ENCODE measurements at regions of chr16 and their contacts with region 1.

Region 1: GRCh38 chr16:29815793-29816693 is at the start of gene PAGR1:
- DNase-seq: peak; percentile 99
- ATAC-seq: peak; percentile 63
- H3K4me3 ChIP-seq: peak within 1 kb of the TSS; percentile 86 to 93 (median 88)
- H3K27ac ChIP-seq: peak within 1 kb of the TSS; percentile 83
- H3K4me1 ChIP-seq: peaks cover 80% of the 10 kb centered on the region
- H3K27me3 ChIP-seq: peaks cover 0 to 12% of the 10 kb centered on the region in 2 experiments; a peak in 2 of 5 replicates
- CTCF ChIP-seq: peak; percentile 99
- EP300 ChIP-seq: peak in 1 of 2 experiments; percentile 75; a peak in 2 of 4 replicates
- POLR2A ChIP-seq: peak in 1 of 2 experiments; percentile 85; a peak in 2 of 4 replicates
- RAD21 ChIP-seq: peak; percentile 96
- total RNA-seq, gene PAGR1: 66.4 and 74.5 TPM in 2 replicates

Region 2: DNA sequence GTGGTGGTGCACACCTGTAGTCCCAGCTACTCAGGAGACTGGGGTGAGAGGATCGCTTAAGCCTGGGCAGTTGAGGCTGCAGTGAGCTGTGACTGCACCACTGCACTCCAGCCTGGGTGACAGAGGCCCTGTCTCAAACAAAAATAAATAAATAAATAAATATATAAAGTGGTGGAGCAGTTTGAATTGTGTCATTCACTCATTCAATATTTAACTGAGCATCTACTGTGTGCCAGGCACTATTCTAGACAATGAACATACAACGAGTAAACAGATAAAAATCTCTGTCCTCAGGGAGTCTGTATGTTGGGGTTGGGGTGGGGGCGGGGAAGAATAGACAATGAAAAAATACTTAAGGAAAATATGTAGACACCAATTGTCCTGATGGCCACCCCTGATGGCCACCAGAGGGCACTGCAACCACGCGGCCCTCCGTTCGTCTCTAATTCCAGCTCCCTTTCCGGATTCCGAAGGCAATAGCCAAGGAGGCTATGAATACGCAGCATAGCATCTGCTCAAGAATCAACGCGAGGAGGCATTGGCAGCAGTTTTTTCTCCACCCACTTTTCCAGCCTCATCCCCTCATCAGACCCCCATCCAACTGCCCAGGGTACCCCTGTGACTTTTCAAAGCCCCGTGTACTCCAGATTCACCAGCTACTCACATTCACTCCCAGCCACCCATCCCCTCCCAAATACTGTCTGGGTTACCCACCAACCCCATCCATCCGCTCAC is 115.6 kb before region 1 on chr16:
- CTCF ChIA-PET with region 1: interaction called, 6 read pairs
- POLR2A ChIA-PET with region 1: interaction called, 11 read pairs
- in situ Hi-C with region 1: no loop called
- intact Hi-C with region 1: no loop called
- DNase-seq: peak; percentile 71
- ATAC-seq: peak; percentile 64
- H3K4me3 ChIP-seq: no peak overlapping the region
- H3K27ac ChIP-seq: no peak overlapping the region
- H3K4me1 ChIP-seq: peaks cover 19% of the 10 kb centered on the region
- H3K27me3 ChIP-seq: peaks cover 0 to 4% of the 10 kb centered on the region in 2 experiments; a peak in 1 of 5 replicates
- CTCF ChIP-seq: peak; percentile 92
- EP300 ChIP-seq: no peak
- POLR2A ChIP-seq: no peak
- RAD21 ChIP-seq: peak; percentile 91

Region 3: DNA sequence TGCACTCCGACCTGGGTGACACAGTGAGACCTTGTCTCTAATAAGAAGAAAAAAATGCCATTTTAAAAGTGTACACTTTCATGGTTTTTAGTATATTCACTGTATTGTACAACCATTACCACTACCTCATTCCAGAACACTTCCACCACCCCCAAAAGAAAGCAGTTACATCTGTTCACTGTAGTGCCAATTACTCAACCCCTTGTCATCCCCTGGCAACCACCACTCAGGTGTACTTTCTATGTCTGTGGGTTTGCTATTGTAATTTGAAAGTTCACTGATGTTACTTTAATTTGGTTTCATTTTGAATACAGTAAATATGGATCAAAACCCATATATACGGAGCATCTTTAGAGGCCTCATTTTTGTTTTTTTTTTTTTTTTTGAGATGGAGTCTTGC is 31.9 kb before region 1 on chr16:
- CTCF ChIA-PET with region 1: no interaction called
- POLR2A ChIA-PET with region 1: no interaction called
- in situ Hi-C with region 1: no loop called
- intact Hi-C with region 1: no loop called
- DNase-seq: no peak
- ATAC-seq: no peak
- H3K4me3 ChIP-seq: no peak overlapping the region
- H3K27ac ChIP-seq: no peak overlapping the region
- H3K4me1 ChIP-seq: peaks cover 46% of the 10 kb centered on the region
- H3K27me3 ChIP-seq: peaks cover 2 to 18% of the 10 kb centered on the region in 2 experiments; a peak in 4 of 5 replicates
- CTCF ChIP-seq: no peak
- EP300 ChIP-seq: no peak
- POLR2A ChIP-seq: no peak
- RAD21 ChIP-seq: no peak

Region 4: GRCh38 chr16:29805378-29806098 is 10.5 kb before region 1 on chr16:
- CTCF ChIA-PET with region 1: no interaction called
- POLR2A ChIA-PET with region 1: interaction called, 80 read pairs
- in situ Hi-C with region 1: no loop called
- intact Hi-C with region 1: no loop called
- DNase-seq: peak; percentile 97
- ATAC-seq: peak; percentile 78
- H3K4me3 ChIP-seq: peak overlapping the region; percentile 59 to 85 (median 77)
- H3K27ac ChIP-seq: peak overlapping the region; percentile 88
- H3K4me1 ChIP-seq: peaks cover 50% of the 10 kb centered on the region
- H3K27me3 ChIP-seq: no peaks in the 10 kb centered on the region
- CTCF ChIP-seq: peak; percentile 36
- EP300 ChIP-seq: peak in 1 of 2 experiments; percentile 64; a peak in 1 of 4 replicates
- POLR2A ChIP-seq: peak in 1 of 2 experiments; percentile 82; a peak in 2 of 4 replicates
- RAD21 ChIP-seq: peak; percentile 66

Region 5: GRCh38 chr16:29862884-29863668 is 47.0 kb after region 1 on chr16 and contains the start of gene CDIPT:
- CTCF ChIA-PET with region 1: no interaction called
- POLR2A ChIA-PET with region 1: interaction called, 18 read pairs
- in situ Hi-C with region 1: no loop called
- intact Hi-C with region 1: no loop called
- DNase-seq: peak; percentile 97
- ATAC-seq: peak; percentile 94
- H3K4me3 ChIP-seq: peak within 1 kb of the TSS; percentile 85 to 95 (median 88)
- H3K27ac ChIP-seq: peak within 1 kb of the TSS; percentile 97
- H3K4me1 ChIP-seq: peaks cover 37% of the 10 kb centered on the region
- H3K27me3 ChIP-seq: no peaks in the 10 kb centered on the region; a peak in 1 of 5 replicates
- CTCF ChIP-seq: peak; percentile 95
- EP300 ChIP-seq: peak in 1 of 2 experiments; percentile 50; a peak in 3 of 4 replicates
- POLR2A ChIP-seq: peak; percentile 42 to 64
- RAD21 ChIP-seq: peak; percentile 65; the same call in 1 of the 2 replicates
- total RNA-seq, gene CDIPT: 39.2 and 54.9 TPM in 2 replicates

Region 6: DNA sequence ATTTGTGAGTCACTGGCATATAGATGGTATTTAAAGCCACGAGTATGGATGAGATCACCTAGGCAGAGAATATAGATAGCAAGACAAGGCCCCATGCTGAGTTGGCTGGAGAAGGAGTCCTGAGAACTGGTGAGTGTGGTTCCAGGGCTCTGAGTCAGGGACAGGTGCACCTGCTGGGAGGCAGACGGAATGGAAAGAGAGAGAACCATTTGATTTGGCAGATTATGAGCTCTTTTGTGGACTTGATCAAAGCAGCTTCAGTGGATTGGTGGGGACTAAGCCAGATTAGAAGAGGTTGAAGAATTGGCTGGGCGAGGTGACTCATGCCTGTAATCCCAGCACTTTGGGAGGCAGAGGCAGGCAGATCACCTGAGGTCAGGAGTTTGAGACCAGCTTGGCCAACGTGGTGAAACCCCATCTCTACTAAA is 202.7 kb after region 1 on chr16:
- CTCF ChIA-PET with region 1: no interaction called
- POLR2A ChIA-PET with region 1: no interaction called
- in situ Hi-C with region 1: no loop called
- intact Hi-C with region 1: loop called (anchors 2 kb)
- DNase-seq: no peak
- ATAC-seq: no peak
- H3K4me3 ChIP-seq: no peak overlapping the region
- H3K27ac ChIP-seq: no peak overlapping the region
- H3K4me1 ChIP-seq: peaks cover 22% of the 10 kb centered on the region
- H3K27me3 ChIP-seq: peaks cover 6 to 27% of the 10 kb centered on the region in 2 experiments
- CTCF ChIP-seq: no peak
- EP300 ChIP-seq: no peak
- POLR2A ChIP-seq: no peak
- RAD21 ChIP-seq: no peak

Measured in HepG2 (cell line).